Activated T-helper 1 cell treated with anti-CD3 and anti-CD28 coated beads, Interleukin-12 subunit alpha, Interleukin-12 subunit beta, Interleukin-2, Interleukin-4 antibody, amounts not matched to agents 30 ng/mL and 10 ng/mL and 1 ng/mL, durations not matched to agents 14 hours and 24 hours and 36 hours (primary cell): ENCODE measurements at regions of chr17 and their contacts with region 1.

Region 1: GRCh38 chr17:3723556-3724369 is at the start of gene HASPIN:
- DNase-seq: peak; percentile 93
- H3K4me3 Mint-ChIP-seq: peak within 1 kb of the TSS; percentile 98
- H3K27ac Mint-ChIP-seq: peak within 1 kb of the TSS; percentile 86
- H3K4me1 Mint-ChIP-seq: peaks cover 62% of the 10 kb centered on the region
- H3K27me3 Mint-ChIP-seq: no peaks in the 10 kb centered on the region
- total RNA-seq, gene HASPIN: 25.7 and 26.1 TPM in 2 replicates

Region 2: GRCh38 chr17:3636154-3636907 is 87.4 kb before region 1 on chr17 and contains the starts of genes CTNS and SHPK:
- intact Hi-C with region 1: loop called (anchors 5 kb)
- DNase-seq: peak; percentile 95
- H3K4me3 Mint-ChIP-seq: peak within 1 kb of the TSS; percentile 95
- H3K27ac Mint-ChIP-seq: peak within 1 kb of the TSS; percentile 98
- H3K4me1 Mint-ChIP-seq: peaks cover 48% of the 10 kb centered on the region
- H3K27me3 Mint-ChIP-seq: no peaks in the 10 kb centered on the region
- total RNA-seq, gene CTNS: 47.5 and 55.3 TPM in 2 replicates
- total RNA-seq, gene SHPK: 20.0 and 21.5 TPM in 2 replicates

Region 3: GRCh38 chr17:3683054-3683511 is 40.7 kb before region 1 on chr17:
- intact Hi-C with region 1: loop called (anchors 2 kb)
- DNase-seq: no peak
- H3K4me3 Mint-ChIP-seq: no peak overlapping the region
- H3K27ac Mint-ChIP-seq: peak overlapping the region; percentile 28
- H3K4me1 Mint-ChIP-seq: peaks cover 19% of the 10 kb centered on the region
- H3K27me3 Mint-ChIP-seq: no peaks in the 10 kb centered on the region

Region 4: DNA sequence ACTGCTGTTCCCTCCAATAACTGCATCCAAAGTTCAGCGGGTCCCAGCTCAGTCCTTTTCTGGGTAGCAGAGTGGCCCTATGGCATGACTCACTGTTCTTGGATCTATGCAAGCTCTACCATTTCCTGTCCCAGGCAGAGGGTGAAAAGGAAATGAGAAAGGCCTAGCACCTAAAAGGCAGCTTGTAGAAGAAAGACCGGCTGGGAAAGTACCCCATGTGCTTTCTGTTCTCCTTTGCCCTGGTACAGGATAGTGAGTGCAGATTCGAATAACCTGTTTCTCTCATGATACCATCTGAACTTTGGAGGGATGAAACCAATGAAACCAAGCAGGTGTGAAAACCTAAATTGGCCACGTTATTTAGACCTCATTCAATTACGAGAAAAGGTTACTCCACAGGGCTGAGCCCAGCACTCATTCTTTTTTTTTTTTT is 12.8 kb before region 1 on chr17:
- intact Hi-C with region 1: loop called (anchors 1 kb)
- DNase-seq: peak; percentile 83
- H3K4me3 Mint-ChIP-seq: peak overlapping the region; percentile 64
- H3K27ac Mint-ChIP-seq: peak overlapping the region; percentile 74
- H3K4me1 Mint-ChIP-seq: peaks cover 56% of the 10 kb centered on the region
- H3K27me3 Mint-ChIP-seq: no peaks in the 10 kb centered on the region

Region 5: GRCh38 chr17:3893003-3893719 is 169.4 kb after region 1 on chr17 and contains the start of gene CAMKK1:
- intact Hi-C with region 1: loop called (anchors 5 kb)
- DNase-seq: peak; percentile 90
- H3K4me3 Mint-ChIP-seq: peak within 1 kb of the TSS; percentile 82
- H3K27ac Mint-ChIP-seq: peak within 1 kb of the TSS; percentile 86
- H3K4me1 Mint-ChIP-seq: peaks cover 30% of the 10 kb centered on the region
- H3K27me3 Mint-ChIP-seq: no peaks in the 10 kb centered on the region
- total RNA-seq, gene CAMKK1: 6.1 and 7.8 TPM in 2 replicates